OCI-LY7 (cell line): ENCODE measurements at regions of chr1 and their contacts with region 1.

Region 1: GRCh38 chr1:150979092-150980056 is 2.7 kb upstream of the ANXA9 start:
- DNase-seq: peak; percentile 92
- H3K4me3 ChIP-seq: no peak overlapping the region
- H3K27ac ChIP-seq: no peak overlapping the region
- H3K4me1 ChIP-seq: peaks cover 44% of the 10 kb centered on the region
- CTCF ChIP-seq: peak; percentile 100

Region 2: DNA sequence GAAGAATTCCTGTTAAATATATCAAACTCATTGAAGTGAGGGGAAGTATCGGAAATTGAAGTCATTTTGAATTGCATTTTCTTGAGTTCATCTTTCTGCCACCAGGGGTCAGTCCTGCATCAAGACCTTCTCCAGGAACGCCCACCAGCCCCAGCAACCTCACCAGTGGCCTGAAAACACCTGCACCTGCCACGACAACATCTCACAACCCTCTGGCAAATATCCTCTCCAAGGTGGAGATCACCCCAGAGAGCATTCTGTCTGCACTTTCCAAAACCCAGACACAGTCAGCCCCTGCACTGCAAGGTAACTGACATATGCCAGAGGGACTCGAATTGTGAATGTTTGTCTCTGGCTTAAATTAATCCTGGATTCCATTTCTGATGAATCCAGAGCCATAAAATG is 515.0 kb before region 1 on chr1:
- CTCF ChIA-PET with region 1: no interaction called
- POLR2A ChIA-PET with region 1: interaction called, 4 read pairs
- intact Hi-C with region 1: loop called (anchors 10 kb)
- DNase-seq: peak; percentile 80
- H3K4me3 ChIP-seq: no peak overlapping the region
- H3K27ac ChIP-seq: no peak overlapping the region
- H3K4me1 ChIP-seq: no peaks in the 10 kb centered on the region
- CTCF ChIP-seq: peak; percentile 84

Region 3: DNA sequence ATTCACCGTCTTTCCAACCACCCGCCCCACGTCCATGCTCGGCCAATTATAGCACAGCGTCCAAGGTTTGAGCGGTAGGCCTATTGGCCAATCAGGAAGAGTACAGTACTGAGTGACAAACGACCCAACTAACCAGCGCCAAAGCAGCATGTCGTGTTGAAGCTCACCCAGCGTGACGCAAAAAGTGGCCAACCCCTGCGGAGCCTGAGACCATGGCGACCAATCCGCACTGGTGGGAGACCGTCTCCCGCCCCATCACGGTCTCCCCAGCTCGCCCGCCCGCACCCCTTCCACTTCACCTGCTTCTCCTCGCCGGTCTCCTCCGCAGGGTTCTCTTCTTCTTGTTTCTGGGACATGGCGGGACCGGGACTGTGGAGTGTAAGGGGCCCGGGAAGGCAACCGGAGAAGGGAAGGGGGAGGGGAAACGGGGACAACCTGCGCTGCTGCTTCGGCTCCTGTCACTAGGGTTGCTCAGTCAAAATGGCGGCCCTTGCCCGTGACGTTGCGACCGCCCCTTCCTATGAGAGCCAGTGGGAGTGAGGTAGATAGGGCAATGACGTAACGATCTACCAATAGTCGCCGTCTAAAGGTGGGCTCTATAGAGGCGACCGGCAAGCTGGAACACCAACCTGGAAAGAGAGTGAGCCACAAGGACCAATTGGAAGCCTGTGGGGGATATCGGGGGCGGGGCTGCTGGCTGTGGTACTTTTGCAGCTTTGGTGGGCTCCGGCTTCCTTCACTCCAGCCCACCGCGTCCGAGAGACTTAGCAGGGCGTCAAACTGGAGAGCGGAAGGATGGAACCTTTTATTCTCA is 350.1 kb before region 1 on chr1 and contains the start of gene ENSA:
- CTCF ChIA-PET with region 1: no interaction called
- POLR2A ChIA-PET with region 1: no interaction called
- intact Hi-C with region 1: loop called (anchors 5 kb)
- DNase-seq: peak; percentile 100
- H3K4me3 ChIP-seq: peak within 1 kb of the TSS; percentile 89
- H3K27ac ChIP-seq: peak within 1 kb of the TSS; percentile 79
- H3K4me1 ChIP-seq: peaks cover 28% of the 10 kb centered on the region
- CTCF ChIP-seq: no peak
- total RNA-seq, gene ENSA: 97.1 and 116 TPM in 2 replicates

Region 4: GRCh38 chr1:150895601-150896000 is 83.8 kb before region 1 on chr1:
- CTCF ChIA-PET with region 1: no interaction called
- POLR2A ChIA-PET with region 1: no interaction called
- intact Hi-C with region 1: no loop called
- DNase-seq: no peak
- H3K4me3 ChIP-seq: no peak overlapping the region
- H3K27ac ChIP-seq: no peak overlapping the region
- H3K4me1 ChIP-seq: peaks cover 2% of the 10 kb centered on the region
- CTCF ChIP-seq: no peak

Region 5: DNA sequence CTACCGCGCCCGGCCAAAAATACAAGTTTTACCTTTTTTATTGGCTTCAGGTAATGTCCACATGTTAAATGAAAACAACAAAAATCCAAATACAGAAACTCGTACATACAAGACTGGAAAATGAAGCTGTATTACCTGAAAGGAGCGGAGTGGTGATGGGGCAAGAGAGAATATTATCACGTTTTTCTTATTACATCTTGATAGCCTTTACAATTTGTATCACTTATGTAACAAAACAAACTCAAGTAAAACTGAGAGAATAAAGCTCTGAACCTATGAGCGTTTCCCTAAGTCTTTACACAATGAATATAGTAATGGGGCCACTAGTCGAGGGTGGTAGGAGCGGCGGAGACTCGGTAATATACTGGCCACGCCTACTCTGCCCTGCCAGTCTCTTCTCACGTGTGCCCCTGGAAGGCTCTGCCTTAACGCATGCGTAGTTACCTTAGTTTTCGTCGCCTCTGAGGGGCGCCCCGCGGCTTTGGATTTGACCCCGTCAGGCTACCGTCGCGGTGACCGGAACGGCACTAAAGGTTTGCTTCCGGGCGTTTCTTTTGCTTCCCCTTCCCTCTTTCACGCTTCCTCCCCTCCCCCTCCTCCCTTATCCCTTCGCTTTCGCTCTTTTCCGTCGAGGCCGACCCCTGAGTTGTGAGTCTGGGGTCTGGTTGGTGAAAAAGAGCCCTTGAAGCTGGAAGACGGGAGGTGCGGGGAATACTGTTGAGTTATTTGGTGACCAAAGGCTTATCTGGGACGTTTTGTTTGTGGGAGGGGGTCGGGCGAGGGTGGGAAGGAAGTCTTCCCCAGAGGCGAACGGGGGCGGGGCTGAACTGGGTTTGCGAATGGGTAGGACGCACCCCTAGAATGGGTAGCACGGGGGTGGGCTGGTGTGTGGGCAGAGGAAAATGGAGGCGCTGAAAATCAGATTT is 53.3 kb before region 1 on chr1 and contains the start of gene SETDB1:
- CTCF ChIA-PET with region 1: interaction called, 4 read pairs
- POLR2A ChIA-PET with region 1: no interaction called
- intact Hi-C with region 1: loop called (anchors 1 kb)
- DNase-seq: peak; percentile 99
- H3K4me3 ChIP-seq: peak within 1 kb of the TSS; percentile 75
- H3K27ac ChIP-seq: peak within 1 kb of the TSS; percentile 64
- H3K4me1 ChIP-seq: peaks cover 37% of the 10 kb centered on the region
- CTCF ChIP-seq: 0 out of 2 replicates have a peak, but pooled peaks have one; percentile 35
- total RNA-seq, gene SETDB1: 42.3 and 66.8 TPM in 2 replicates

Region 6: DNA sequence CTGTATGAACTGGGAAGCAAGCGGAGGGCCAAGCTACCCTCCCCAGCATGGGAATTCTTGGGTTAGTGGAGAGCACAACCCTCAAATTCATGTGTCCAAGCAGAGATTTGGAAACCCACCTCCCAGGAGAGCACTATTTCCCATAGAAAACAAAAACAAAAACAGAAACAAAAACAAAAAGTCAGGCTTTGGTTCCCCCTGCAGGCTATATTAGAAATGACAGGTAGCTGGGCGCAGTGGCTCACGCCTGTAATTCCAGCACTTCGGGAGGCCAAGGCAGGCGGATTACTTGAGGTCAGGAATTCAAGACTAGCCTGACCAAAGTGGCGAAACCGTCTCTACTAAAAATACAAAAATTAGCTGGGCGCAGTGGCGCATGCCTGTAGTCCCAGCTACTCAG is 16.5 kb after region 1 on chr1:
- CTCF ChIA-PET with region 1: no interaction called
- POLR2A ChIA-PET with region 1: no interaction called
- intact Hi-C with region 1: loop called (anchors 2 kb)
- DNase-seq: no peak
- H3K4me3 ChIP-seq: peak overlapping the region; percentile 20
- H3K27ac ChIP-seq: no peak overlapping the region
- H3K4me1 ChIP-seq: no peaks in the 10 kb centered on the region
- CTCF ChIP-seq: peak; percentile 87

Region 7: GRCh38 chr1:151008190-151008860 is 29.0 kb after region 1 on chr1 and contains the start of gene PRUNE1:
- CTCF ChIA-PET with region 1: interaction called, 6 read pairs
- POLR2A ChIA-PET with region 1: interaction called, 7 read pairs
- intact Hi-C with region 1: loop called (anchors 1 kb)
- DNase-seq: peak; percentile 97
- H3K4me3 ChIP-seq: peak within 1 kb of the TSS; percentile 83
- H3K27ac ChIP-seq: peak within 1 kb of the TSS; percentile 47
- H3K4me1 ChIP-seq: peaks cover 54% of the 10 kb centered on the region
- CTCF ChIP-seq: no peak
- total RNA-seq, gene PRUNE1: 15.4 and 18.8 TPM in 2 replicates